BJ (cell line): ENCODE measurements at regions of chr17 and their contacts with region 1.

Region 1: GRCh38 chr17:50626037-50626574 is 8.6 kb upstream of the ABCC3 start:
- DNase-seq: no peak
- H3K4me3 ChIP-seq: no peak overlapping the region
- H3K27me3 ChIP-seq: no peaks in the 10 kb centered on the region
- CTCF ChIP-seq: peak; percentile 82

Region 2: GRCh38 chr17:50541716-50542688 is 84.1 kb before region 1 on chr17:
- CTCF ChIA-PET with region 1: interaction called, 186 read pairs
- POLR2A ChIA-PET with region 1: no interaction called
- DNase-seq: peak; percentile 15
- H3K4me3 ChIP-seq: peak overlapping the region; percentile 59
- H3K27me3 ChIP-seq: no peaks in the 10 kb centered on the region
- CTCF ChIP-seq: peak; percentile 16; the same call in 1 of the 2 replicates

Region 3: GRCh38 chr17:50560185-50560824 is 65.8 kb before region 1 on chr17 and contains the start of gene CACNA1G:
- CTCF ChIA-PET with region 1: interaction called, 14 read pairs
- POLR2A ChIA-PET with region 1: no interaction called
- DNase-seq: peak; percentile 25
- H3K4me3 ChIP-seq: peak within 1 kb of the TSS; percentile 37
- H3K27me3 ChIP-seq: peaks cover 40% of the 10 kb centered on the region
- CTCF ChIP-seq: no peak
- polyA plus RNA-seq, gene CACNA1G: 0.01 and 0.02 TPM in 2 replicates

Region 4: GRCh38 chr17:50668025-50668837 is 42.1 kb after region 1 on chr17:
- CTCF ChIA-PET with region 1: interaction called, 14 read pairs
- POLR2A ChIA-PET with region 1: no interaction called
- DNase-seq: no peak
- H3K4me3 ChIP-seq: no peak overlapping the region
- H3K27me3 ChIP-seq: no peaks in the 10 kb centered on the region
- CTCF ChIP-seq: no peak

Region 5: DNA sequence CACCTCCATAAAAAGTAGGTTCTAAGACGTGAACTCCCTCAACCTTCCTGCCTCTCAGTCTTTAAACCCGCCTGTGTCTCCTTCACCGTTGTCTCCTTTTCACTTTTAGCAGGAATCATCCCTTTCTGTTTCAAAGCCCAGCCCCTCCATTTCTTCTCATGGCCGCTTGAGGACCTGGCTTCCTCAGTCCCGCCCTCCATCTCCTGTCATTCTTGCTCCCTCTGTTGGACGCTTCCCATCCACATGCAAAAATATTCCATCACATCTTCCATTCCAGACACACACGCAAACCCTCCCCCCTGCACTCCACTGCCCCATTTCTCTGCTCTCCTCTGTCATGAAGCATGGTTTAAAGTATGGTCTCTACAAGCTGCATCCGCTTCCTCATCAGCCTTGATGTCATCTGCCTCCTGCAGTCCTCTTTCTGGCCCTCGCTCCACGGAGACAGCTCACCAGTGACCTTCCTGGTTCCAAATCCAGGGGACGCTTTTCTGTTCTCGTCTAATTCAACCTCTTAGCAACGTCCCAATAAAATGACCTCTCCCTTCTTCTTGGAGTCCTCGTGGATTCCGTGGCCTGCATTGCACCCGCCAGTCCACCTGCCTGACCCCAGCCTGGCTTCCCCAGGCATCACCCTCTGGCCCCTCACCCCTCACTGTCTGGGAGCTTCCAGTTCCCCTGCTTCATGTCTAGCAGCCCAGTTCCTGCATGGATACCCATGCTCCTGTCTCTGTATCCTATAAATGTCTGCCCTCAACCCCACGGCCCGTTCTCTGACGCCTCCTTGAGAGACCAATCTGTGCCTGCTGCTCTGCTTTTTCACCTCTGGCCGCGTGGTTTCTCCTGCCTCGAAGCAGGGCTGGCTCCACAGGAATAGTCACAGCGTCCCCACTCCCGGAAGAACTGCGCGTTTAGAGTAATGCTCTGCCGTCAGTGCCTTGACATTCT is 55.4 kb after region 1 on chr17:
- CTCF ChIA-PET with region 1: interaction called, 17 read pairs
- POLR2A ChIA-PET with region 1: no interaction called
- DNase-seq: no peak
- H3K4me3 ChIP-seq: no peak overlapping the region
- H3K27me3 ChIP-seq: no peaks in the 10 kb centered on the region
- CTCF ChIP-seq: peak; percentile 74

Region 6: DNA sequence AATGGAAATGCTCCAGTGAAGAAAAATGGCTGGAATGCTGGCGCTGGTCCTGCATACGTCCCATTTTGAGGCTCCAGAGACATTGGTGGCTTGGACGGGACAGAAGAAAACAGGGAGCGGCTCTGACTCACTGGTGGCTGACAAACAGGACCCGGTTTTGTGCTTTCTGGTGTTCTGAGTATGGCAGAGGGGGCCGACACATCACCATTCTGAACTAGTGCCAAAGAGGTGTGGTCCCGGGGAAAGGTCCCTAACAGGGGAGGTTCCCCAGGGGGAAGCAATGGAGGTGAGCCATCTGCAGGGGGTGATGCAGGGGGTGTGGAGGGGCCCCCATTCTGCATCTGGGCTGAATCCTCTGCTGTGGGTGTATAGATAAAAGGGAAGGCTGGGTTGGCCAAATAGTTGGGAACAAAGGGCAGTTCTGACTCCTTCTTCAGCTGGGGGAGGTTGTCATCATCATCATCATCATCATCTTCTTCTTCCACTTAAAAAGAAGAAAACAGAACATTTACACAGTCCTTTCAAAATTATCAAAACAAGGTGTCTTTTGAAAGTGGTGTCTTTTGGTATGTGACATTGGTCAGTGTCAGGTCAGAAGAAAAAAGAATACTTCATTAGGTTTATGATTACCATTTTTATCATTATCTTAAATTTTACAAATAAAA is 73.4 kb after region 1 on chr17:
- CTCF ChIA-PET with region 1: interaction called, 130 read pairs
- POLR2A ChIA-PET with region 1: no interaction called
- DNase-seq: no peak
- H3K4me3 ChIP-seq: no peak overlapping the region
- H3K27me3 ChIP-seq: no peaks in the 10 kb centered on the region
- CTCF ChIP-seq: no peak

Region 7: GRCh38 chr17:50919321-50920085 is 293.4 kb after region 1 on chr17:
- CTCF ChIA-PET with region 1: no interaction called
- POLR2A ChIA-PET with region 1: no interaction called
- DNase-seq: peak; percentile 42
- H3K4me3 ChIP-seq: no peak overlapping the region
- H3K27me3 ChIP-seq: no peaks in the 10 kb centered on the region
- CTCF ChIP-seq: no peak